CD4-positive, alpha-beta memory T cell (primary cell): ENCODE measurements at regions of chr20 and their contacts with region 1.

Region 1: GRCh38 chr20:2688041-2688591 is 4.5 kb upstream of the EBF4 start:
- DNase-seq: peak; percentile 78 to 84 (median 80)
- H3K4me3 ChIP-seq: no peak overlapping the region
- H3K4me3 Mint-ChIP-seq: peak overlapping the region in 6 of 8 donors; percentile 20 to 64 (median 43)
- H3K27ac ChIP-seq: no peak overlapping the region
- H3K27ac Mint-ChIP-seq: peak overlapping the region in 4 of 7 donors; percentile 65 to 77 (median 70)
- H3K4me1 ChIP-seq: peaks cover 16% of the 10 kb centered on the region
- H3K4me1 Mint-ChIP-seq: peaks cover 13 to 30% (median 27%) of the 10 kb centered on the region in 4 donors
- H3K27me3 ChIP-seq: no peaks in the 10 kb centered on the region
- H3K27me3 Mint-ChIP-seq: peaks cover 7 to 29% of the 10 kb centered on the region in 2 donors

Region 2: GRCh38 chr20:2729251-2729713 is 41.2 kb after region 1 on chr20:
- CTCF ChIA-PET with region 1: interaction called, 21 read pairs
- POLR2A ChIA-PET with region 1: interaction called, 10 read pairs
- intact Hi-C with region 1: no loop called
- DNase-seq: peak; percentile 52 to 65 (median 58)
- H3K4me3 ChIP-seq: peak overlapping the region in 1 of 2 donors; percentile 0
- H3K4me3 Mint-ChIP-seq: peak overlapping the region; percentile 59 to 86 (median 71)
- H3K27ac ChIP-seq: peak overlapping the region; percentile 33
- H3K27ac Mint-ChIP-seq: peak overlapping the region; percentile 82 to 96 (median 95)
- H3K4me1 ChIP-seq: peaks cover 26% of the 10 kb centered on the region
- H3K4me1 Mint-ChIP-seq: peaks cover 10 to 31% (median 22%) of the 10 kb centered on the region in 4 donors
- H3K27me3 ChIP-seq: no peaks in the 10 kb centered on the region
- H3K27me3 Mint-ChIP-seq: peaks cover 0 to under 1% of the 10 kb centered on the region in 2 donors

Region 3: DNA sequence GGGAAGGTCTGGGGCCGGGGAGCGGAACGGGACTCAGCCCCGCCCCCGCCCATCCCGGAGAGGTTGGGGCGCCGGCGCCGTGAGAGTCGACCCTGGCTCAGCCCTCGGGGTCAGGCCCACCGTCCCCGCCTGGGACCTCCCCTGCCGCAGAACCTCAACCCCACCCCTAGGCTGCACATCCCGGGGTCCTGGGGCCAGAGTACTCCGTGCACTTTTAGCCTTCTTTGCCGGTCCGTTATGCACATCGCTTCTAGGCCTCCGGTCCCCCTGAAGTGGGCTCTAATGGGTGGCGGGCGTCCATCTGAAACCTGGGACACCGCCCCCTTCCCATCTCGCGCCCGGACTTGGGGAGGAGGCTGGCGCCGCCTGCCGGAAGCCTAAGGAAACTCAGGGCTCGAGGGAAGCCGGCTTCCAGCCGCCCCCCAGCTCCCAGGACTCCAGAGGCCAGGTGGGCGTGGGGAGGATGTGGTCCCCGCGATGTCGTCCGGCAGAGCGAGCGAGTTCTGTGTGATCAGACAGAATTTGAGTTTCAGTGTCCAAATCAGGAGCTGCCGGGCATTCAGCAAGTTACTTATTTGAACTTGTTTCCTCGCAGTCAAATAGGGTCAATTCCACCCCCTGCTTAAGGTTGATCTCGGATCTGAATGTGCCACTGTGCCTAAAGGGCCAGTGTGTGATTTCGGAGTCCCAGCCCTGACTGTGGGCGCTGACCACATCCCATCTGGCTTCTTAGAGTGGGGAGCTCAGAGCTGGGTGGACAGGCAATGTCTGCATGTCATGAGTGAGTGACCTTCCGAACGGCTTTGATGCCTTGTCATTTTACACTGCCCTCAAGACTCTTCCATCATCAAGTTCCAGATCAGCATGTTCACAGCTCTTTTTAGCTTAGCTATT is 64.7 kb after region 1 on chr20:
- CTCF ChIA-PET with region 1: interaction called, 26 read pairs
- POLR2A ChIA-PET with region 1: interaction called, 7 read pairs
- intact Hi-C with region 1: loop called (anchors 1 kb)
- DNase-seq: peak in 4 of 5 donors; percentile 48 to 55 (median 52)
- H3K4me3 ChIP-seq: peak overlapping the region; percentile 28 to 33
- H3K4me3 Mint-ChIP-seq: peak overlapping the region; percentile 81 to 89 (median 86)
- H3K27ac ChIP-seq: no peak overlapping the region
- H3K27ac Mint-ChIP-seq: peak overlapping the region; percentile 57 to 90 (median 74)
- H3K4me1 ChIP-seq: peaks cover 27% of the 10 kb centered on the region
- H3K4me1 Mint-ChIP-seq: peaks cover 16 to 40% (median 28%) of the 10 kb centered on the region in 4 donors
- H3K27me3 ChIP-seq: peaks cover 5% of the 10 kb centered on the region
- H3K27me3 Mint-ChIP-seq: peaks cover 2 to 9% of the 10 kb centered on the region in 2 donors

Region 4: GRCh38 chr20:2984956-2985661 is 297.0 kb after region 1 on chr20:
- CTCF ChIA-PET with region 1: no interaction called
- POLR2A ChIA-PET with region 1: no interaction called
- intact Hi-C with region 1: loop called (anchors 5 kb)
- DNase-seq: no peak
- H3K4me3 ChIP-seq: no peak overlapping the region
- H3K4me3 Mint-ChIP-seq: no peak overlapping the region
- H3K27ac ChIP-seq: no peak overlapping the region
- H3K27ac Mint-ChIP-seq: no peak overlapping the region
- H3K4me1 ChIP-seq: peaks cover 14% of the 10 kb centered on the region
- H3K4me1 Mint-ChIP-seq: peaks cover 0 to 6% (median 4%) of the 10 kb centered on the region in 4 donors
- H3K27me3 ChIP-seq: no peaks in the 10 kb centered on the region
- H3K27me3 Mint-ChIP-seq: no peaks in the 10 kb centered on the region

Region 5: GRCh38 chr20:3115190-3116107 is 427.3 kb after region 1 on chr20:
- CTCF ChIA-PET with region 1: no interaction called
- POLR2A ChIA-PET with region 1: no interaction called
- intact Hi-C with region 1: loop called (anchors 10 kb)
- DNase-seq: peak in 4 of 5 donors; percentile 27 to 43 (median 34)
- H3K4me3 ChIP-seq: no peak overlapping the region
- H3K4me3 Mint-ChIP-seq: no peak overlapping the region
- H3K27ac ChIP-seq: no peak overlapping the region
- H3K27ac Mint-ChIP-seq: peak overlapping the region in 4 of 7 donors; percentile 62 to 81 (median 66)
- H3K4me1 ChIP-seq: peaks cover 6% of the 10 kb centered on the region
- H3K4me1 Mint-ChIP-seq: peaks cover 5 to 34% (median 8%) of the 10 kb centered on the region in 4 donors
- H3K27me3 ChIP-seq: no peaks in the 10 kb centered on the region
- H3K27me3 Mint-ChIP-seq: no peaks in the 10 kb centered on the region